ENCODE measurements at regions of chr1 and their contacts with region 1.

Region 1: DNA sequence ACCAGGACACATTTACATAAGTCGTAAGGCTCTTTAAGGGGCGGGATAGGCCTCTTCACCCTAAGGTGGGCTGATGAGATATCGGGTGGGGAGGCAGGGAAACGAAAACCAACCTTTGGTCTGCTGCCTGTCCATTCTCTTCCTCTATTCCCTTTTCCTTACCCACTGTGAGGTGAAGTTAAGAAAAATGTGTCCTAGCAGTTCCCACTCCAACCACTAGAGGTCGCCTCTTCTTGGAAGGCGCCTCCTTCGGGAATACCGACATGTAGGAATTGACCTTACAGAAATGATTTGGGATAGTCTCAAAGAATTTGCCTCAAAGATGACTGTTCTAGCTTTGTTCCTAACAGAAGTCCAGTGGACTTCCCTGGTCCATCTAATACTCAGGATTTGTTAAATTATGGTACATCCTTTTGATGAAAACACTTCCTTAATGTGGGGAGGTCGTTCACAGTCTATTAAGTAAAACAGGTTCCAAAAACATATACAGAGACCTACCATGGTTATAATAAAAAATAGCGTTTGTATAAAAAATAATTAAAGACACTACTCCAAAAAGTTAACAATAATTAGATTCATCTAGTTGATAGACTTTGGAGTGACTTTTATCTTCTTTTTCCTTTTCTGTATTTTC is 14.1 kb downstream of the AZIN2 start:
- DNase-seq: peak; percentile 29
- CTCF ChIP-seq: peak; percentile 83

Region 2: DNA sequence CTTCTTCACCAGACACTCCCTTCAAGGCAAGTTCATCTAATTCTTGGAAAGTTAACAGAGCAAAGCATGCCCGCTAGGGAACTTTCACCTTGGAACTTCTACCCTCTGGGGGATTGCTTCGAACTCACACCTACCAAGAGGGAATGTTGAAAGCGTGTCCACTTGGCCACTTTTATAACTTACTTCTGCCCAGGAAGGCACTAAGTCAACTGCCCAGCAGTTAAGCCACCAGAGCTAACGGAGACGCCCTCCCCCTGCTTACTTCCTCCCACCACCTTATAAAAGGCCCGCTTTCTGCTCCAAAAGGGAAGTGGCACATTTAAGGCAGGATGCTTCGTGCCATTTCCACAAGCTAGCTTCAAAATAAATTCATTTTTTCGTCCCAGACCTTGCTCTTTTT is 55.3 kb before region 1 on chr1:
- CTCF ChIA-PET with region 1: no interaction called
- POLR2A ChIA-PET with region 1: no interaction called
- DNase-seq: no peak
- CTCF ChIP-seq: no peak

Region 3: GRCh38 chr1:33111970-33112369 is 16.9 kb after region 1 on chr1:
- CTCF ChIA-PET with region 1: interaction called, 10 read pairs
- POLR2A ChIA-PET with region 1: interaction called, 7 read pairs
- DNase-seq: no peak
- CTCF ChIP-seq: peak; percentile 50

Region 4: GRCh38 chr1:33119532-33120217 is 24.6 kb after region 1 on chr1:
- CTCF ChIA-PET with region 1: interaction called, 12 read pairs
- POLR2A ChIA-PET with region 1: no interaction called
- DNase-seq: peak; percentile 42
- CTCF ChIP-seq: peak; percentile 20

Region 5: GRCh38 chr1:33127001-33127791 is 32.1 kb after region 1 on chr1:
- CTCF ChIA-PET with region 1: interaction called, 21 read pairs
- POLR2A ChIA-PET with region 1: no interaction called
- DNase-seq: peak; percentile 94
- CTCF ChIP-seq: peak; percentile 97